Activated CD8-positive, alpha-beta T cell treated with anti-CD3 and anti-CD28 coated beads, Interleukin-2, amount 10 ng/mL, durations not matched to agents 7 days and 5 days (primary cell): ENCODE measurements at regions of chr14 and their contacts with region 1.

Region 1: GRCh38 chr14:101774006-101774795 is 12.7 kb downstream of the PPP2R5C start:
- DNase-seq: no peak
- ATAC-seq: no peak
- H3K4me3 Mint-ChIP-seq: no peak overlapping the region
- H3K27ac Mint-ChIP-seq: no peak overlapping the region
- H3K4me1 Mint-ChIP-seq: peaks cover 9% of the 10 kb centered on the region
- H3K27me3 Mint-ChIP-seq: peaks cover 3% of the 10 kb centered on the region

Region 2: GRCh38 chr14:101791919-101792572 is 17.8 kb after region 1 on chr14:
- CTCF ChIA-PET with region 1: interaction called, 15 read pairs
- POLR2A ChIA-PET with region 1: interaction called, 6 read pairs
- DNase-seq: no peak
- ATAC-seq: peak; percentile 84
- H3K4me3 Mint-ChIP-seq: peak overlapping the region; percentile 62
- H3K27ac Mint-ChIP-seq: peak overlapping the region; percentile 83
- H3K4me1 Mint-ChIP-seq: peaks cover 11% of the 10 kb centered on the region
- H3K27me3 Mint-ChIP-seq: no peaks in the 10 kb centered on the region

Region 3: GRCh38 chr14:101889898-101890297 is 115.7 kb after region 1 on chr14:
- CTCF ChIA-PET with region 1: interaction called, 10 read pairs
- POLR2A ChIA-PET with region 1: interaction called, 3 read pairs
- DNase-seq: no peak
- ATAC-seq: no peak
- H3K4me3 Mint-ChIP-seq: no peak overlapping the region
- H3K27ac Mint-ChIP-seq: no peak overlapping the region
- H3K4me1 Mint-ChIP-seq: no peaks in the 10 kb centered on the region
- H3K27me3 Mint-ChIP-seq: no peaks in the 10 kb centered on the region

Region 4: DNA sequence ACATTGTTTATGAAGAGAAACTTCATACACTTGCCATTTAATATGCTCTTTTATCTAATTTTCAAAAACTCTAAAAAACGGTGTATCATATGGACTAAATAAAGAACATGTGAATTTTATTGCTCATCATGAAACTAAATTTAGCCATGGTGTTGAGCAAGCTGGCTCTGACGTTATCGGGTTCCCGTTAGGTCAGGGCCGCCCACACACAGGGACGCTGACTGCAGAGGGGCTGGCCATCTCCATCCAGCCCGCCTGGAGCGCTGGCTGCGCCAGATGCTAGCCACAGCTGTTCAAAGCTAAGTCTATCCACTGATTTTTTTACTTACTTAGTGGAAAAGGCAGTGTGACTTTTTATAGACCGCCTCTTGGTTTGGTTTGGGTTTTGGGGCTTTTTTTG is 153.7 kb after region 1 on chr14:
- CTCF ChIA-PET with region 1: interaction called, 10 read pairs
- POLR2A ChIA-PET with region 1: no interaction called
- DNase-seq: no peak
- ATAC-seq: no peak
- H3K4me3 Mint-ChIP-seq: no peak overlapping the region
- H3K27ac Mint-ChIP-seq: no peak overlapping the region
- H3K4me1 Mint-ChIP-seq: no peaks in the 10 kb centered on the region
- H3K27me3 Mint-ChIP-seq: no peaks in the 10 kb centered on the region